Upper lobe of right lung (tissue), 1 donor: ENCODE measurements at regions of chr17 and their contacts with region 1.

Region 1: GRCh38 chr17:38982858-38983746 is 15.9 kb upstream of the FBXO47 start:
- DNase-seq: no peak
- ATAC-seq: peak; percentile 80
- H3K4me3 ChIP-seq: no peak overlapping the region
- H3K27ac ChIP-seq: no peak overlapping the region
- H3K4me1 ChIP-seq: no peaks in the 10 kb centered on the region
- H3K27me3 ChIP-seq: no peaks in the 10 kb centered on the region
- CTCF ChIP-seq: peak; percentile 83

Region 2: GRCh38 chr17:38940404-38940803 is 42.7 kb before region 1 on chr17:
- intact Hi-C with region 1: no loop called
- DNase-seq: no peak
- ATAC-seq: no peak
- H3K4me3 ChIP-seq: no peak overlapping the region
- H3K27ac ChIP-seq: no peak overlapping the region
- H3K4me1 ChIP-seq: no peaks in the 10 kb centered on the region
- H3K27me3 ChIP-seq: no peaks in the 10 kb centered on the region
- CTCF ChIP-seq: no peak

Region 3: GRCh38 chr17:39057701-39058206 is 74.7 kb after region 1 on chr17:
- intact Hi-C with region 1: loop called (anchors 10 kb)
- DNase-seq: no peak
- ATAC-seq: no peak
- H3K4me3 ChIP-seq: peak overlapping the region; percentile 59
- H3K27ac ChIP-seq: no peak overlapping the region
- H3K4me1 ChIP-seq: no peaks in the 10 kb centered on the region
- H3K27me3 ChIP-seq: no peaks in the 10 kb centered on the region
- CTCF ChIP-seq: no peak

Region 4: GRCh38 chr17:39153599-39154051 is 170.5 kb after region 1 on chr17:
- intact Hi-C with region 1: loop called (anchors 5 kb)
- DNase-seq: peak; percentile 94
- ATAC-seq: peak; percentile 75
- H3K4me3 ChIP-seq: peak overlapping the region; percentile 67
- H3K27ac ChIP-seq: peak overlapping the region; percentile 85
- H3K4me1 ChIP-seq: peaks cover 16% of the 10 kb centered on the region
- H3K27me3 ChIP-seq: peaks cover 3% of the 10 kb centered on the region
- CTCF ChIP-seq: no peak